Pancreas (tissue), 10 donors: ENCODE measurements at regions of chr22 and their contacts with region 1.

Region 1: DNA sequence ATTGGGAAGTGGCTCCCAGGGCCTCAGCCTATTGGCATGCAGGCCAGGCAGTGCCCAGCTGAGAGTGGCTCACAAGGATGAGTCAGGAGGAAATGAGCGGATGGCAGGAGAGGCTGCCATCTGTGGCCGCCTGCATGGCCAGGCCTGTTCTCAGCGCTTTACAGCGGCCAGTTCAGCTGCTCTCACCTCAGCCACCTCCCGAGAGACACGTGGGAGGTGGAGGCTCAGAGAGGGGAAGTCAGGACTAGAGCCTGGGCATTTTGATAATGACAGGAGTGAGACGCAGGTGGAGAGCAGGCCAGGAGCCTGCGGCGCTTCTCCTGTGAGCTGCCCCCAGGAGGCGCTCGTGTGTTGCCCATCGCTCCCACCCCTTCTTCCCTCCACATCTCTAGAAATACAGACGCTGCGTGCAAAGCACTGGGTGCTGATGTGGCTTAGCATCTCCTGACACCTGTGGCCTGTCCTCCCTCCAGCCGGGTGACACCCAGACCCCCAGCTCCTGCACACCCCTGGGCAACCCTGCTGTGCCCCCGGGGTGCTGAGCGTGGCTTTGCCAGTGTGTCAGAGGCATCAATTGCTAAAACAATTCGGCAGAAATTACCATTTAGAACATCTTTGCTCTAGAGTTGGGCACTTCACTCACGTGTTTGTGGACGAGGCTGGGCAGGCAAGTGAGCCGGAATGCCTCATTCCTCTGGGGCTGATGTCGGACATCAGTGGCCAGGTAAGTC is 21.4 kb upstream of the PANX2 start:
- DNase-seq: peak; percentile 47 to 83 (median 72)
- ATAC-seq: peak; percentile 79 to 94 (median 89)
- H3K4me3 ChIP-seq: no peak overlapping the region
- H3K27ac ChIP-seq: no peak overlapping the region
- H3K4me1 ChIP-seq: no peaks in the 10 kb centered on the region
- H3K27me3 ChIP-seq: no peaks in the 10 kb centered on the region
- CTCF ChIP-seq: peak; percentile 63 to 74 (median 66)

Region 2: GRCh38 chr22:50016988-50017700 is 132.0 kb before region 1 on chr22:
- intact Hi-C with region 1: no loop called
- DNase-seq: peak in 3 of 6 donors; percentile 21 to 51 (median 49)
- ATAC-seq: peak in 1 of 4 donors; percentile 10
- H3K4me3 ChIP-seq: no peak overlapping the region
- H3K27ac ChIP-seq: no peak overlapping the region
- H3K4me1 ChIP-seq: no peaks in the 10 kb centered on the region
- H3K27me3 ChIP-seq: peaks cover 0 to 11% (median 2%) of the 10 kb centered on the region in 4 donors
- CTCF ChIP-seq: no peak

Region 3: DNA sequence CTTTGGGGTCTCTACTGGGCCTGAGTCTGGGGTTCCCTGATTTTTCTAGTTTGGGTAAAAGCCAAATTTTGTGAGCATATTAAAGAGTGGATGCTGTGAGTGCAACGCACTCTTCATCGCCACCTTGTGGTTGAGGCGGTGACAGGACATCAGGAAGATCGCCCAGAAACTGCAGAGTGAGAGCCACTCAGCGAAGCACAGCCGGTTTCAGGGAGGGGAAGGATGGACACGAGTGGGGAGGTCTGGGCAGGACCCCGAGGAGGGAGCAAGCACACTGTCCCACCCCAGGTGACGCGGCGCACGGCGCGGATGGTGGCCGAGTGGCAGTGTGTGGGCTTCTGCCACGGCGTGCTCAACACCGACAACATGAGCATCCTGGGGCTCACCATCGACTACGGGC is 60.7 kb after region 1 on chr22:
- intact Hi-C with region 1: loop called in 2 of 3 experiments (anchors 2 kb)
- DNase-seq: peak in 4 of 6 donors; percentile 49 to 77 (median 62)
- ATAC-seq: peak; percentile 73 to 84 (median 80)
- H3K4me3 ChIP-seq: no peak overlapping the region
- H3K27ac ChIP-seq: no peak overlapping the region
- H3K4me1 ChIP-seq: no peaks in the 10 kb centered on the region
- H3K27me3 ChIP-seq: no peaks in the 10 kb centered on the region
- CTCF ChIP-seq: peak; percentile 70 to 84 (median 72)

Region 4: GRCh38 chr22:50276143-50276542 is 127.0 kb after region 1 on chr22:
- intact Hi-C with region 1: no loop called
- DNase-seq: peak in 5 of 6 donors; percentile 51 to 77 (median 59)
- ATAC-seq: peak; percentile 39 to 67 (median 64)
- H3K4me3 ChIP-seq: no peak overlapping the region
- H3K27ac ChIP-seq: no peak overlapping the region
- H3K4me1 ChIP-seq: peaks cover 4 to 9% (median 8%) of the 10 kb centered on the region in 3 donors
- H3K27me3 ChIP-seq: no peaks in the 10 kb centered on the region
- CTCF ChIP-seq: peak in 2 of 4 donors; percentile 25 to 27